Lower leg skin (tissue), 4 donors: ENCODE measurements at regions of chr22 and their contacts with region 1.

Region 1: GRCh38 chr22:17477391-17477833 is 85.9 kb upstream of the SLC25A18 start:
- DNase-seq: no peak
- H3K4me3 ChIP-seq: no peak overlapping the region
- CTCF ChIP-seq: no peak
- POLR2A ChIP-seq: no peak

Region 2: GRCh38 chr22:17411213-17411612 is 66.2 kb before region 1 on chr22:
- intact Hi-C with region 1: loop called (anchors 10 kb)
- DNase-seq: no peak
- H3K4me3 ChIP-seq: no peak overlapping the region
- CTCF ChIP-seq: no peak
- POLR2A ChIP-seq: no peak

Region 3: DNA sequence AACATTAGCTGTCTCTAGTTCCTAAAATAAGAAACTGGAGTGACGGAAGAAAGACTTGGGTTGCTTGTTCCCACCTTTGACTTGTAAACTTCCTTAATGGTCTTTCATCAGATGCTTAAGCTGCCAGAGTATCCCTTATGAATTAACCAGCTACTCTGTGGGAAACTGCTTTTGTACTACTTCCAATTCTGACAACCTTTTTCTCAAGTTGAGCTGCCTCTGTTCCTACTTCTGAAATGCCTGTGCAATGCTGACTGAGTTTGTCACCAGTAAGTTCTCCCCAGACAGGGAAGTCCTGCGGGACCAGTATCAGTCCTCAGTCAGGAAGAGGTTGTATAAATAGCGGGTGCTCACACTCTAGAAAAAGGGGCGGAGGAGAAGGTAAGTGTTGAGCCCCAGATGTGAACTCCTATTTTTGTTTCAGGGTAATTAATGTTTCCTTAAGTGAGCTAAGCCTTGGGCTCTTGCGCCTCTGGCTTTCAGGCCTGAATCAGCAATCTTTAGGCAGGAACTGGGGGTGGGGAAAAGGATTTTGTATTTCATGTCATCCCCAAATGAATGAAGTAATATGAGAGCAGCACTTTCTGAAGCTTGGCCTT is 40.9 kb before region 1 on chr22:
- intact Hi-C with region 1: no loop called
- DNase-seq: no peak
- H3K4me3 ChIP-seq: no peak overlapping the region
- CTCF ChIP-seq: no peak
- POLR2A ChIP-seq: no peak